Activated CD4-positive, alpha-beta memory T cell treated with anti-CD3 and anti-CD28 coated beads, Interleukin-2, amount 10 ng/mL, durations not matched to agents 7 days and 5 days (primary cell): ENCODE measurements at regions of chr1 and their contacts with region 1.

Region 1: GRCh38 chr1:160837558-160838205 is 25.0 kb downstream of the CD244 start:
- DNase-seq: peak; percentile 92
- H3K4me3 Mint-ChIP-seq: peak overlapping the region; percentile 52
- H3K27ac Mint-ChIP-seq: peak overlapping the region; percentile 98
- H3K4me1 Mint-ChIP-seq: peaks cover 53% of the 10 kb centered on the region
- H3K27me3 Mint-ChIP-seq: no peaks in the 10 kb centered on the region

Region 2: GRCh38 chr1:160597705-160598104 is 240.0 kb before region 1 on chr1:
- CTCF ChIA-PET with region 1: no interaction called
- POLR2A ChIA-PET with region 1: no interaction called
- DNase-seq: no peak
- H3K4me3 Mint-ChIP-seq: no peak overlapping the region
- H3K27ac Mint-ChIP-seq: no peak overlapping the region
- H3K4me1 Mint-ChIP-seq: no peaks in the 10 kb centered on the region
- H3K27me3 Mint-ChIP-seq: peaks cover 1% of the 10 kb centered on the region

Region 3: DNA sequence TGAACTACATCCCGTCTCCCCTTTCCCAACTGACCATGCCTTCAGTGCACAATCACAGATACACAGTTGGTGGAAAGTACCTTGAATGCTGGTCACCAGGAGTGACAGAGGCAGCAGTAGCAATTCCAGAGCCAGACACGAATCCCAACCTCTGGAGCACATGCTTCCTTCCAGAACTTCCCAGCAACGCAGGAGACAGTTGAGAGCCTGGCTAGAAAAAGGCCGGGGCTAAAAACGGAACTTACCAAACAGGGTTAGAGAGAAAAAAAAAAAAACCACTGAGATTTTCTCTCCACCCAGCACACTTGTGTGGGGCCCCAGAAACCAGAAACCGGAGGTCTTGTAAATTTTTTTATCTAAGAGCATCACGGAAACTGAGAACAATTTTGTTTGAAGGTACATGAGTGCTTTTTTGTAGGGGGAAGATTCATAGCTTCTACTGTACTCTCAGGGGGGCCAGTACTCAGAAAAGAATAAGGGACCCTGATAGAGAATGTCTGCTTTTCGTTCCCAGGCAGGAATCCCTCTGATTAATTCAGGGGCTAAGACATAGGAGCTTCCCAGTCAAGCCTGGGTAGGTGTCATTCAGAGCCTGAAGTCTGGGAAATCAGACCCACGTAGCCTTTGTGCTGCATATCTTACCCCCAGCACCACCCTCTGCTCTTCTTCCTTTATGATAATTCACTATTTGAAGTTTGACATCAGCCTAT is 125.9 kb before region 1 on chr1 and contains the start of gene CD48:
- CTCF ChIA-PET with region 1: interaction called, 11 read pairs
- POLR2A ChIA-PET with region 1: interaction called, 11 read pairs
- DNase-seq: peak; percentile 61
- H3K4me3 Mint-ChIP-seq: no peak within 1 kb of the TSS
- H3K27ac Mint-ChIP-seq: no peak within 1 kb of the TSS
- H3K4me1 Mint-ChIP-seq: peaks cover 20% of the 10 kb centered on the region
- H3K27me3 Mint-ChIP-seq: no peaks in the 10 kb centered on the region
- total RNA-seq, gene CD48: 403 to 404 TPM

Region 4: GRCh38 chr1:160741612-160742348 is 95.9 kb before region 1 on chr1:
- CTCF ChIA-PET with region 1: no interaction called
- POLR2A ChIA-PET with region 1: no interaction called
- DNase-seq: no peak
- H3K4me3 Mint-ChIP-seq: no peak overlapping the region
- H3K27ac Mint-ChIP-seq: peak overlapping the region; percentile 61
- H3K4me1 Mint-ChIP-seq: peaks cover 69% of the 10 kb centered on the region
- H3K27me3 Mint-ChIP-seq: peaks cover 2% of the 10 kb centered on the region

Region 5: DNA sequence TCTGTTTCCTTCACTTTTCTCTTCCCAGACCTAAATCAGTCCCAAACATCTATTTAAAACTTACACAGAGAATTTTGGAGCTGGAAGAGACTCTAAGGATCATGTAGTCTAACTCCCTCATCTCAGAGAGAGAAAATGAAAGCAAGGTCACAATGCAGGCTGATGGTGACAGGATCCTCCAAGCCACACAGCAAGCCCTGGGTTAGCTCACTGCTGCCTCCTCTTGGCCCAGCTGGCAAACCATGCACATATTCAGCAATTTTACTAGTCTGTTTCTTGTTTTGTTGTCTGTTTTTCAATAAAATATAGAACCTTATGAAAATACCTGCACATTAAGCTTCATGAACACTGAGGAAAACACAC is 69.4 kb before region 1 on chr1:
- CTCF ChIA-PET with region 1: interaction called, 14 read pairs
- POLR2A ChIA-PET with region 1: interaction called, 12 read pairs
- DNase-seq: peak; percentile 90
- H3K4me3 Mint-ChIP-seq: peak overlapping the region; percentile 70
- H3K27ac Mint-ChIP-seq: peak overlapping the region; percentile 86
- H3K4me1 Mint-ChIP-seq: peaks cover 26% of the 10 kb centered on the region
- H3K27me3 Mint-ChIP-seq: peaks cover 4% of the 10 kb centered on the region

Region 6: GRCh38 chr1:160795951-160796383 is 41.7 kb before region 1 on chr1 and contains the start of gene LY9:
- CTCF ChIA-PET with region 1: interaction called, 58 read pairs
- POLR2A ChIA-PET with region 1: interaction called, 46 read pairs
- DNase-seq: peak; percentile 88
- H3K4me3 Mint-ChIP-seq: peak within 1 kb of the TSS; percentile 91
- H3K27ac Mint-ChIP-seq: peak within 1 kb of the TSS; percentile 96
- H3K4me1 Mint-ChIP-seq: peaks cover 66% of the 10 kb centered on the region
- H3K27me3 Mint-ChIP-seq: peaks cover 3% of the 10 kb centered on the region
- total RNA-seq, gene LY9: 46.4 to 49.9 TPM

Region 7: DNA sequence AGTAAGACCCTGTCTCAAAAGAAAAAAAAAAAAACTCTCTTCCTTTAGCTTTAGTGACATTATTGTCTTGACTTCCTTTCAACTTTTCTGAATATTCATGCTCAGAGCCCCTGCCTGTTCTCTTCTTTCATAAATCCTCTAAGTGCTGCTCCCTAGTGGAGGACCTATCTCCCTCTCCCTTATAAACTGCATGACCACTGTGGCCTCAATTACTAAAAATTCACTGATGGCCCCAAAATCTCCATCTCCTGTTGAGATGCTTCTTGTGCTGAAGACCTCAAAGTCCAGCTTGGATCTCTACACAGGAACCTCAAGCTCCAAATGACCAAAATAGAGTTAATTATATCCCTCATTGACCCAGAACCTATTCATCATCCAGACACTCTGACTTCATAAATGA is 39.5 kb after region 1 on chr1:
- CTCF ChIA-PET with region 1: interaction called, 67 read pairs
- POLR2A ChIA-PET with region 1: interaction called, 10 read pairs
- DNase-seq: no peak
- H3K4me3 Mint-ChIP-seq: no peak overlapping the region
- H3K27ac Mint-ChIP-seq: no peak overlapping the region
- H3K4me1 Mint-ChIP-seq: peaks cover 8% of the 10 kb centered on the region
- H3K27me3 Mint-ChIP-seq: peaks cover 5% of the 10 kb centered on the region

Region 8: GRCh38 chr1:160951443-160952128 is 113.9 kb after region 1 on chr1:
- CTCF ChIA-PET with region 1: interaction called, 300 read pairs
- POLR2A ChIA-PET with region 1: interaction called, 21 read pairs
- DNase-seq: peak; percentile 81
- H3K4me3 Mint-ChIP-seq: no peak overlapping the region
- H3K27ac Mint-ChIP-seq: no peak overlapping the region
- H3K4me1 Mint-ChIP-seq: peaks cover 7% of the 10 kb centered on the region
- H3K27me3 Mint-ChIP-seq: no peaks in the 10 kb centered on the region

Region 9: DNA sequence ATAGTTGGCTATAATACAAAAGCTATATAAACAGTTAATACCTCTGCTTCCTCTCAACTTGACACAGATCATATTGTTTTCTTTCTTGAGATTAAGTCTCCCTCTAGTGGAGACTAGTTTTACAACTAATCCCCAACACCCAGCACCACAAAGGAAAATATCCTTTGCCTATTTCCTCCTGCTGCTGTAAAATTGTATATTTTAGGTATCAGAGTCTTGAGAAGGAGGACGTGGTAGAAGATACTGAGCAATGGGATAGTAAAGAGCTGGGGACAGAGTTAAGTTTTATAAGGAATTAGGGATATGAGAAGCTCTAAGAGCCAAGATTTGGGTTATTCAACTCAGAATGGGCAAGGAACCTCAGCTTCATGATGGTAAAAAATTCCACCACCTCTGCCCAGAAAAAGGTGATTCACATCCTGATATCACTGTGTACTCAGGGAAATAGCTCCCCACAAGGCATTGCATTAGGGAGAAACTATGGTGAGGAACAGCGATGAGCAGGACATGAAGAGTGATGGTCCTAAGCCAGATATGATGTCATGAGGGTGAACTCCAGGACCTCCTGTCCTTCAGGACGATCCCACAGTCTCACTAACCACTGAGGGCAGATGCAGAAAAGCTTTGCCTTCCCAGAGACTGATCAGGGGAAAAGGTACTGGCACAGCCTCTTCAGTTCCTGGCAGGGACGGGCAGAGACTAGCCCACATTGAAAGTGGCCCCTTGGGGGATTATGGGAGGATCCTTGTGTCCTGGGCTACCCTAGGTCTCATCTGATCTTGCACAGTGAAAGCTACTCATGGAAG is 544.7 kb after region 1 on chr1:
- CTCF ChIA-PET with region 1: no interaction called
- POLR2A ChIA-PET with region 1: no interaction called
- DNase-seq: no peak
- H3K4me3 Mint-ChIP-seq: no peak overlapping the region
- H3K27ac Mint-ChIP-seq: no peak overlapping the region
- H3K4me1 Mint-ChIP-seq: peaks cover 18% of the 10 kb centered on the region
- H3K27me3 Mint-ChIP-seq: no peaks in the 10 kb centered on the region